Heart right ventricle (tissue), 16 donors: ENCODE measurements at regions of chr15 and their contacts with region 1.

Region 1: DNA sequence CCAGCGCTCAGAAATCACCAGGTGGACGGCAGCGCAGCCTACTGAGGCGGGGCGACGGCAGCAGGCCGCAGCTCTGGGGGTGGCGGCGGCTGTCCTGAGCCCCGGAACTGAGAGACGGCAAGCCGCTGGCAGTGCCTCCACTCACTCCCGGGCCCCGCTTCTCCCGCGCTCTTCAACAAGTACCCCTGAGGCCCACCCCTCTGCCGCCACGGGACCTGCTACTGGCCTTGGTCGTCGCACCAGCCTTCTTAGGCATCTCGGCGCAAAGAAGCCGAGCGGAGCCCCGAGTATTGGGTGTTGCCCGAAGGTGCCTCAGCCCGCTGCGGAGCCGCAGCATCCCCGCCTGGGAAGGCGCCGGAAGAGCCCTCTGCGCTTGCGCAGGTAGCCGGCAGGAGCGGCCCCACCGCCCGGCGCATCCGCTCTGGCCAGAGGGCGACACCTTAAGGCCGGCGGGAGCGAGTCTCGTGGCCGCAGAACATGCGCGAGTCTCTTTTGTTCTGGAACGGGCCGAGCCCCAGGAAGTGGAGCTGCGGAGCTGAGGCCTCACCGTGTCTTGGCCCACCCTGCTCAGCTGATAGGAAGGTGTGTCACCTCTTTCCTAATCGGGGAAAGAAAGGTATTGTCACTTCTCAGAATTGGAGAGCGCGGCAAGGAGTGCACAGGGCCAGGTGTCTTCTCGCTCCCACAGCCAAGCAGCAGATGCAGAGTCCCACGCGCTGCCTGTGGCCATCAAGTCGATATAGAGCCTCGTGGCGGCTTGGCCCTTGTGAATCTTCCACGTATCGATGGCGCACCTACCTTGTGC is at the start of gene C15orf40:
- DNase-seq: peak; percentile 91 to 92
- ATAC-seq: peak; percentile 98 to 100 (median 99)
- H3K4me3 ChIP-seq: peak within 1 kb of the TSS; percentile 81 to 100 (median 96)
- H3K27ac ChIP-seq: peak within 1 kb of the TSS in 9 of 10 donors; percentile 79 to 90 (median 87)
- H3K4me1 ChIP-seq: peaks cover 4 to 31% (median 26%) of the 10 kb centered on the region in 9 donors
- H3K27me3 ChIP-seq: no peaks in the 10 kb centered on the region
- CTCF ChIP-seq: peak; percentile 37 to 89 (median 63)
- total RNA-seq, gene C15orf40: 7.5 to 19.6 (median 10.5) TPM

Region 2: DNA sequence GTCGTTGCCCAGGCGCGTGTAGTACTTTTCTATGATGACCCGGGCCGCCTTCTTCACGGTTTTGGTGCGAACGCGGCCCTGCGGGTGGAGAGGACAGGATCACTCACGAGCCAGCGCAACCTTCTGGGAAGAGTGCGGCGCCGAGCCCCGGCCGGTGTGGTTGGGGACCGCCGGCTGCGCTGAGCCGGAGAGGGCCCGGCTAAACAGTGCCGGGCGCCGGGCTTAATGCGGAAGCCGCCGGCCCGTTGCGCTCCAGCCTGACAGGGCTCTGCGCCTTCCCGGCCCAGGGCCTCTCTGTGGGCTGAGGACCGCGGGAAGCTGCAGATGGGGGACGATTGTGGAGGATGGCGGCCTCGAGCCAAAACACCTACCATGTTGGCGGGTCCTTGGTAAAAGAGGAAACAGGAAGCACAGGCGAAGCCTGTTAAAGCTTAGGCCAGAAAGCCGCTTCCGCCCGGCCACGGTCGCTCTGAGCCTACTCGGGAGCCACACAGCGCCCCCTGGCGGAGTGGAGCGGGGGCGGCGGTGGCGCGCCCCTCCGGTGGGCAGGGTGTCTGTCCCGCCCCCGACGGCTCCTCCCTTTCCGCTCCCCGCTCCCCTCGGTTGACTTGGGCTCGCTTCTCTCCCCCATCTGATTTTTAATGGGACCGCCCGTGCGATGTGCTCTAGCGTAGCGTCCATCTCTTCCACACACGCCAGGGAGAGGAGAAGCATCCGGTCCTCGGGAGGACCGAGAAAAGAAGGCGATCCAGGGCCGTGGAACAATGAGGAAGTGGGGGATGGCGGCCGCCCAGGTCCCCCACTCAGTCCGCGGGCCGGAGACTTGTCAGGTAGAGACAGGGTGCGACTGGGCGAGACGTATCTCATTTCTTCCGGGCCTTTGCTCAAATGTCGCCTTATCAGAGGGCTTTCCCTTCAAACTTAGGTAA is 471.2 kb before region 1 on chr15 and contains the start of gene RPS17:
- intact Hi-C with region 1: loop called in 3 of 10 experiments (anchors 10 kb)
- DNase-seq: peak; percentile 96 to 98
- ATAC-seq: peak; percentile 97 to 99 (median 98)
- H3K4me3 ChIP-seq: peak within 1 kb of the TSS; percentile 65 to 98 (median 88)
- H3K27ac ChIP-seq: peak within 1 kb of the TSS; percentile 51 to 96 (median 90)
- H3K4me1 ChIP-seq: peaks cover 2 to 47% (median 41%) of the 10 kb centered on the region in 9 donors
- H3K27me3 ChIP-seq: peaks cover 0 to 4% (median 0%) of the 10 kb centered on the region in 7 donors
- CTCF ChIP-seq: peak; percentile 98 to 100 (median 100)
- total RNA-seq, gene RPS17: 675 to 1,048 (median 736) TPM

Region 3: DNA sequence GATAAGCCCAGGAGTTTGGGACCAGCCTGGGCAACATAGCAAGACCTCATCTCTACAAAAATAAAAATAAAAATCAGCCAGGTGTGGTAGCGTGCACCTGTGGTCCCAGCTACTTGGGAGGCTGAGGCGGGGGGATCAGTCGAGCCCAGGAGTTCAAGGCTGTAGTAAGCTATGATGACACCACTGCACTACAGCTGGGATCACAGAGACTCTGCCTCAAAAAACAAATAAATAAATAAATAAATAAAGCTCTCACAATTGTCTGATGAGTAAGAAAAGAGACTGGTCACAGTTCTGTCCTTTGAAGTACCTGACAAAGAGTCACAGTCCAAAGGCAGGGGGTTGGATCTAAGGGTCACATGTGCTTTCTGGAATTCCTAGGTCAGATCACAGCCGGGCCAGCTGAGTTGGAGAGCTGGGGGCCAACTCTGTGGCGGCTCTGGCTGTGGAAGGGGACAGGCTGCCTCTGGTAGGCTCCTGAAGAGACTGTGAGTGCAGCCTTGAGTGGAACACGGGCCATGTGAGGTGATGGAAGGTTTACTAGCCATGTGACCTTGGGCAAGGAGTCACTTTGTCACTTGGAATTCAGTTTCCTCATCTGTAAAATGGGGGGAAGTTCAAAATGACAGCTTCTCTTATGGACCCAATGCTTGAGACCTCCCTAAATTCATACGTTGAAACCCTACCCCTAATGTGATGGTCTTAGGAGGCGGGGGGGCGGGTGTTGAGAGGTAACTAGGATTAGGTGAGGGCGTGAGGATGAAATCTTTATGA is 154.9 kb before region 1 on chr15:
- intact Hi-C with region 1: no loop called
- DNase-seq: no peak
- ATAC-seq: no peak
- H3K4me3 ChIP-seq: no peak overlapping the region
- H3K27ac ChIP-seq: peak overlapping the region in 3 of 10 donors; percentile 20 to 60 (median 53)
- H3K4me1 ChIP-seq: peaks cover 0 to 7% (median 0%) of the 10 kb centered on the region in 9 donors
- H3K27me3 ChIP-seq: no peaks in the 10 kb centered on the region
- CTCF ChIP-seq: no peak

Region 4: GRCh38 chr15:82985688-82986441 is 25.6 kb before region 1 on chr15 and contains the start of gene RAMAC:
- intact Hi-C with region 1: loop called in 1 of 10 experiments (anchors 1 kb)
- DNase-seq: peak; percentile 85 to 95
- ATAC-seq: peak; percentile 97 to 99 (median 98)
- H3K4me3 ChIP-seq: peak within 1 kb of the TSS; percentile 65 to 95 (median 76)
- H3K27ac ChIP-seq: peak within 1 kb of the TSS; percentile 10 to 91 (median 75)
- H3K4me1 ChIP-seq: peaks cover 3 to 21% (median 15%) of the 10 kb centered on the region in 9 donors
- H3K27me3 ChIP-seq: no peaks in the 10 kb centered on the region
- CTCF ChIP-seq: no peak
- total RNA-seq, gene RAMAC: 12.4 to 17.8 (median 14.4) TPM

Region 5: DNA sequence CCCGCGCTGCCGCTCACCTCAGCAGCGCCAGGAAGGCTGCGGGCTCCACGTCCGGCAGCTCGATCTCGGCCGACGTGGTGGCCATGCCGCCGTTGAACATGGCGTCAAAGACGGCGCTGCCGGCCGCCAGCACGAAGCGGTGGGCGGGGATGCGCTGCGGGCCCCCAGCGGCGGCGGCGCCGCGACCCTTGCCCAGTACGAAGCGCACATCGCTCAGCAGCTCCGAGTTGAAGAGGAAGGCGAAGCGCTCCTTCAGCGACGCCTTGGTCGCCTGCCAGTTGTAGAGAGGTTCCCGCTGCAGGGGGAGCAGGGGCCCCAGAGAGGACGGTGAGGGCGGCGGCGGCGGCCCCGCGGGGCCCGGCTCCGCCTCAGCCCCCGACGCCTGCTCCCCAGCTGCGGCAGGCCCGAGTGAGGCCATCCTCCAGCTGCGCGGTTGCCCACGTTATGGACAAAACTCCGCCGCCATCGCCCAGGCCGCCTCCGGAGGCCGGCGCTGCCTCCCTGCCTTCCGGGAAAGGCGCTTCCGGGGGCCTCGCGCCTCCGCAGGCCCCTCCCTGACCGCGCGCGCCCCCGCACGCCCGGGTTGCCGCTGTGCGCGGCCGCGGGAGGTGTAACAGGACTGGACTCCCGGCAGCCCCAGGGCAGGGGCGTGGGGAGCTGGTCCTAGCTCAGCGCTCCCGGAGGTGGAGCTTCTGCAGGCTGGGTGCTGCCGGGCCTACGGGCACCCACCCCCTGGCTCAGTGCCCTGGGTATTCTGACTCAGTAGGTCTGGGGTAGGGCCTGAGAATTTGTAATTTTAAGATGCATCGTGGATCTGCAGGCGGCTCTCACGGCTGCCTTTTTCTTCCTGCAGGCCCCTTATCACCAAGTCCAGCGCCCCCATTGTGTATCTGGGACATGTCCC is 55.5 kb after region 1 on chr15 and contains the start of gene BTBD1:
- intact Hi-C with region 1: loop called in 4 of 10 experiments (anchors 2 to 10 kb)
- DNase-seq: peak; percentile 93 to 95
- ATAC-seq: peak; percentile 98 to 99 (median 98)
- H3K4me3 ChIP-seq: peak within 1 kb of the TSS; percentile 72 to 99 (median 90)
- H3K27ac ChIP-seq: peak within 1 kb of the TSS; percentile 94 to 100 (median 96)
- H3K4me1 ChIP-seq: peaks cover 5 to 50% (median 42%) of the 10 kb centered on the region in 9 donors
- H3K27me3 ChIP-seq: no peaks in the 10 kb centered on the region
- CTCF ChIP-seq: peak in 3 of 9 donors; percentile 25 to 38 (median 29)
- total RNA-seq, gene BTBD1: 130 to 185 (median 157) TPM

Region 6: GRCh38 chr15:83108266-83109226 is 97.1 kb after region 1 on chr15:
- intact Hi-C with region 1: loop called in 3 of 10 experiments (anchors 2 to 10 kb)
- DNase-seq: peak; percentile 43 to 51
- ATAC-seq: peak; percentile 61 to 85 (median 76)
- H3K4me3 ChIP-seq: peak overlapping the region in 9 of 10 donors; percentile 47 to 74 (median 64)
- H3K27ac ChIP-seq: peak overlapping the region; percentile 41 to 90 (median 73)
- H3K4me1 ChIP-seq: peaks cover 0 to 59% (median 36%) of the 10 kb centered on the region in 9 donors
- H3K27me3 ChIP-seq: peaks cover 0 to 29% (median 9%) of the 10 kb centered on the region in 7 donors
- CTCF ChIP-seq: no peak

Region 7: GRCh38 chr15:83207622-83208411 is 196.3 kb after region 1 on chr15 and contains the start of gene HDGFL3:
- intact Hi-C with region 1: loop called in 7 of 10 experiments (anchors 1 to 10 kb)
- DNase-seq: peak; percentile 62 to 79
- ATAC-seq: peak; percentile 46 to 73 (median 58)
- H3K4me3 ChIP-seq: peak within 1 kb of the TSS; percentile 68 to 96 (median 92)
- H3K27ac ChIP-seq: peak within 1 kb of the TSS; percentile 80 to 96 (median 92)
- H3K4me1 ChIP-seq: peaks cover 2 to 44% (median 17%) of the 10 kb centered on the region in 9 donors
- H3K27me3 ChIP-seq: peaks cover 0 to 36% (median 0%) of the 10 kb centered on the region in 7 donors
- CTCF ChIP-seq: peak in 2 of 9 donors; percentile 8 to 35
- total RNA-seq, gene HDGFL3: 25.5 to 43.2 (median 39.0) TPM

Region 8: DNA sequence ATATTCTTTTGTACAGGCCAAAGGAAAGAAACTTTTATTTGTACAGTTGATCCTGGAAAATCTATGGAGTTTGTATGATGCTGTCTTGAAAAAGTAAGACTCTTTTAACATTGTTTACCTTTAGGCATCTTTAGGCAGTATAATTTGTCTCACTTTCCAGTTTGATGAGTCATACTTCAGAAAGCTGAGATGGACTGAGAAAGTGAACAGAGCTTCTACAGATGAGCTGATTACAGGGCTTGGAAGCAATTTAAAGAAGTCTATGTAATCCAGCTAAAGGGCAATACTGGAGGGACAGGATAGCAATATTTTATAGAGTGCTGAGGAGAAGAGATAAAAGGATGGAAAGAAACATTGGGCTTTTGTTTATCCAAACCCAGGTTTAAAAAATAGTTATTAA is 1100.6 kb after region 1 on chr15:
- intact Hi-C with region 1: no loop called
- DNase-seq: no peak
- ATAC-seq: no peak
- H3K4me3 ChIP-seq: no peak overlapping the region
- H3K27ac ChIP-seq: no peak overlapping the region
- H3K4me1 ChIP-seq: no peaks in the 10 kb centered on the region
- H3K27me3 ChIP-seq: no peaks in the 10 kb centered on the region
- CTCF ChIP-seq: no peak